ENCODE measurements at regions of chr7 and their contacts with region 1.

Region 1: DNA sequence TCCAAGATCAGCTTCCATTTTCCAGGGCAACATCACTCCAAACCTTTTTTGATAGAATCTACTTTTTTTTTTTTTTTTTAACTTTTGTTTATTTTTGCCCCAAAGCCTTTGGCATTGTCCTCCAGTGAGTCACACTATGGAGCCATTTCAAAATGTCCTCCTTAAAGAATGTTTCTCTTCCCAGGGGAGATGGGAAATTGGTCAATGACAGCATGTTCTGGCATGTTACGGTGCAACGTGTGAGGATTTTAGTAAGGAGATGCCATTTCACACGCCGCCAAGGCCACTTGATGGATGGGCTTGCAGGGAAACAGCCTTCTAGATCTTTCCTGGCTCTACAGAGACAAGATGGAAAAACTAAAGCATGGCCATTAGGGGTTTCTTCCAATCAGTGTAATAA is 30.7 kb upstream of the TRIL start:
- DNase-seq: peak; percentile 93
- ATAC-seq: peak; percentile 33
- H3K4me3 ChIP-seq: no peak overlapping the region
- H3K27ac ChIP-seq: no peak overlapping the region
- H3K4me1 ChIP-seq: peaks cover 22% of the 10 kb centered on the region
- H3K27me3 ChIP-seq: peaks cover 2% of the 10 kb centered on the region
- CTCF ChIP-seq: no peak
- POLR2A ChIP-seq: no peak
- RAD21 ChIP-seq: no peak

Region 2: GRCh38 chr7:28958235-28958979 is 30.4 kb before region 1 on chr7 and contains the start of gene TRIL:
- CTCF ChIA-PET with region 1: interaction called, 3 read pairs
- POLR2A ChIA-PET with region 1: no interaction called
- dilution Hi-C with region 1: no loop called
- in situ Hi-C with region 1: no loop called
- intact Hi-C with region 1: loop called (anchors 2 kb)
- DNase-seq: peak; percentile 50
- ATAC-seq: peak; percentile 63
- H3K4me3 ChIP-seq: peak within 1 kb of the TSS; percentile 39
- H3K27ac ChIP-seq: no peak within 1 kb of the TSS
- H3K4me1 ChIP-seq: peaks cover 9% of the 10 kb centered on the region
- H3K27me3 ChIP-seq: peaks cover 60% of the 10 kb centered on the region
- CTCF ChIP-seq: no peak
- POLR2A ChIP-seq: no peak
- RAD21 ChIP-seq: no peak
- total RNA-seq, gene TRIL: under 0.01 TPM in 2 replicates

Measured in IMR-90 (cell line).